Esophagus squamous epithelium (tissue), 5 donors: ENCODE measurements at regions of chr11 and their contacts with region 1.

Region 1: DNA sequence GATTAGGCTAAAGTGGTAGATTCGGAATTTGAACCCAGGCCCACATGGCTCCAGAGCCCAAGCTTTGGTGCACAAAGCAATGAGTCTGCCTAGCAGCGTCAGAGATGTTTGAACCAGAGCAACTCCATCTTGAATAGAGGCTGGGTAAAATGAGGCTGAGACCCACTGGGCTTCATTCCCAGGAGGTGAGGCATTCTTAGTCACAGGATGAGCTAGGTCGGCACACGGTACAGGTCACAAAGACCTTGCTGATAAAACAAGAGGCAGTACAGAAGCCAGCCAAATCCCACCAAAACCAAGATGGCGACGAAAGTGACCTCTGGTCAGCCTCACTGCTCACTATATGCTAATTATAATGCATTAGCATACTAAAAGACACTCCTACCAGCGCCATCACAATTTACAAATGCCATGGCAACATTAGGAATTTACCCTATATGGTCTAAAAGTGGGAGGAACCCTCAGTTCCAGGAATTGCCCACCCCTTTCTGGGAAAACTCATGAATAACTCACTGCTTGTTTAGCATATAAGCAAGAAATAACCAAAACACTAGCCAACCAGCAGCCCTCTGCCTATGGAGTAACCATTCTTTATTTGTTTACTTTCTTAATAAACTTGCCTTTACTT is 40.3 kb upstream of the DAGLA start:
- DNase-seq: no peak
- H3K4me3 ChIP-seq: no peak overlapping the region
- H3K27ac ChIP-seq: no peak overlapping the region
- H3K4me1 ChIP-seq: peaks cover 0 to 4% (median 0%) of the 10 kb centered on the region in 3 donors
- H3K27me3 ChIP-seq: peaks cover 0 to 43% (median 0%) of the 10 kb centered on the region in 4 donors
- CTCF ChIP-seq: no peak
- POLR2A ChIP-seq: no peak

Region 2: GRCh38 chr11:61477727-61478148 is 162.2 kb before region 1 on chr11:
- intact Hi-C with region 1: loop called (anchors 10 kb)
- DNase-seq: no peak
- H3K4me3 ChIP-seq: no peak overlapping the region
- H3K27ac ChIP-seq: peak overlapping the region in 1 of 4 donors; percentile 17
- H3K4me1 ChIP-seq: peaks cover 0 to 14% (median 8%) of the 10 kb centered on the region in 3 donors
- H3K27me3 ChIP-seq: peaks cover 0 to 36% (median 0%) of the 10 kb centered on the region in 4 donors
- CTCF ChIP-seq: peak; percentile 81 to 93 (median 86)
- POLR2A ChIP-seq: no peak

Region 3: GRCh38 chr11:61567286-61568061 is 72.5 kb before region 1 on chr11:
- intact Hi-C with region 1: no loop called
- DNase-seq: no peak
- H3K4me3 ChIP-seq: peak overlapping the region in 1 of 4 donors; percentile 6
- H3K27ac ChIP-seq: no peak overlapping the region
- H3K4me1 ChIP-seq: peaks cover 0 to 8% (median 0%) of the 10 kb centered on the region in 3 donors
- H3K27me3 ChIP-seq: peaks cover 0 to 94% (median 0%) of the 10 kb centered on the region in 4 donors
- CTCF ChIP-seq: peak in 4 of 6 experiments; percentile 24 to 61 (median 32)
- POLR2A ChIP-seq: no peak

Region 4: GRCh38 chr11:61695917-61696316 is 56.0 kb after region 1 on chr11:
- intact Hi-C with region 1: no loop called
- DNase-seq: no peak
- H3K4me3 ChIP-seq: peak overlapping the region in 3 of 4 donors; percentile 13 to 48 (median 27)
- H3K27ac ChIP-seq: peak overlapping the region; percentile 83 to 93 (median 89)
- H3K4me1 ChIP-seq: peaks cover 68 to 95% (median 71%) of the 10 kb centered on the region in 3 donors
- H3K27me3 ChIP-seq: no peaks in the 10 kb centered on the region
- CTCF ChIP-seq: peak in 1 of 6 experiments; percentile 19
- POLR2A ChIP-seq: peak in 2 of 4 donors; percentile 10 to 26